Activated T-helper 2 cell treated with anti-CD3 and anti-CD28 coated beads, Interferon-gamma antibody, Interleukin-2, Interleukin-4, amounts not matched to agents 10 μg/mL and 5 μg/mL and 100 μg/mL, durations not matched to agents 14 hours and 24 hours and 36 hours (primary cell): ENCODE measurements at regions of chrX and their contacts with region 1.

Region 1: DNA sequence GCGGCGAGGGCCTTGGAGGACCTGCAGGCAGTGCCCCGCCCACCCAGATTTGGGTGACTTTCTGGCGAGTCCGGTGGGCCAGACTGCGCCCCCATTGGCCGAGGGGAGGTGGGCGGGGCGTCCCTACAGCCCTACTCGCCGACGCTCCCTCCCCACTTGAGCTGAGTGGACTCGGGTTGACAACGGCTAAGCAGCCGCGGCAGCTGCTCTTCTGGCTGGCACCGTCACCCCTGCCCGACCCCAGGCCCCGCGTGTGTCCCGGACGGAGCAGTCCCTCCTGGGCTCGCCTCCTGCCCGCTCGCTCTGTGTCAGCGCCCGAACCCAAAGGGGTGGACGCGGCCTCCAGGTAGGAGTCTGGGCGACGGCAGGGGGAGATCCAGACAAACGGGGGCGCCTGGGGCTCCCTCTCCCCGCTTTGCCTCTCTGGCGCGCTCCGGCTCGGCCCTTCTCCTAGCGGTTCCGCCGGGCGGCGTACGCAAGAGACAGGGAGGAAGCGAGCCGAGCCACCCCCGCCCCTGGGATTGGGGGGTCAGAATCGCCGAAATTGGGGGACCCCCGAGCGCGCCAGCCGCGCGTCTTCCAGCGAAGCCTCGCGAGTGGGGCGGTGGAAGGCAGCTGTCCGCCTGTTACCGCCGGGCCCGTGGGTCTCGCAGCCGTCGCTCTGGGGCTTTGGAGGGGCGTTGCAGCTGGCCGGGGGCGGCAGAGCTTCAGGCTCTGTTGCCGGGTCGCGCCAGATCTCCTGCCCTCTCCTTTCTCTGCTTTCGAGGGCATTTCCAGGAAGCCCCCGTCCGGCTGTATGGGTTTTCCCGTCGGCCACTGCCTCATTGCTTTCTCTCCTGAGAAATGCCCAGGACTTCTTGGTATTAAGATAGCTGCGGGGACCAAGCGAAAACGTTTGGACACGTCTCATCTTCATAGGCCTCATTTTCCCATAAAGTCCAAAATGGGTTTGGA is 46.3 kb downstream of the STARD8 start:
- DNase-seq: no peak
- H3K4me3 Mint-ChIP-seq: peak overlapping the region; percentile 73
- H3K27ac Mint-ChIP-seq: peak overlapping the region; percentile 63
- H3K4me1 Mint-ChIP-seq: peaks cover 28% of the 10 kb centered on the region
- H3K27me3 Mint-ChIP-seq: no peaks in the 10 kb centered on the region

Region 2: GRCh38 chrX:68571610-68572311 is 122.0 kb before region 1 on chrX:
- intact Hi-C with region 1: loop called (anchors 5 kb)
- DNase-seq: no peak
- H3K4me3 Mint-ChIP-seq: no peak overlapping the region
- H3K27ac Mint-ChIP-seq: peak overlapping the region; percentile 60
- H3K4me1 Mint-ChIP-seq: peaks cover 29% of the 10 kb centered on the region
- H3K27me3 Mint-ChIP-seq: no peaks in the 10 kb centered on the region